Common myeloid progenitor, CD34-positive (primary cell): ENCODE measurements at regions of chr1 and their contacts with region 1.

Region 1: DNA sequence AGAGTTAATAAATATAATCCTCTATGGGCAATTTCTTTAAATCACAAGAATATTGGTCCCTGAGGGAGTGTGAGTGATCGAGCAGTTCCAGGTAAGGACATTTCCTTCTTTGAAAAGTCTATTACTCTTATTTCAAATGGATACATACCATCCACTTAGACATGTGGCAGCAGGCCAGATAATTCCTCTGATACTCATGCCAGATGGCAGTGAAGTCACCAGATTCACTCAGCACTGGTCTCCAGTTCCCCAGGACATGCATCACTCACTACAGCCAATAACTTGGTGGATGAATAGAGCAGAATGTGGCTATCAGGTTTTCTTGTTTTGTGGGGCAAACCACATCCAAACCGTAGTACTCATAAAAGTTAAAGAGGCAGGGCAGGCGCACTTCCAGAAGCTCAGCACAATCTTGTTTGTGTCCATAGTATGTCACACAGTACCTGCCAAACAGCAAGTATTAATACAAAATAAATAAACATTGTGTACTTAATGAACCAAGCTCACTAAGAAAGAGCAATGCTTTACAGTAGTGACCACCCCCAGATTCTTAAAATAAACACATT is 74.2 kb upstream of the CD53 start:
- DNase-seq: no peak
- H3K4me3 ChIP-seq: no peak overlapping the region
- H3K27ac ChIP-seq: no peak overlapping the region
- H3K4me1 ChIP-seq: no peaks in the 10 kb centered on the region
- H3K27me3 ChIP-seq: no peaks in the 10 kb centered on the region

Region 2: DNA sequence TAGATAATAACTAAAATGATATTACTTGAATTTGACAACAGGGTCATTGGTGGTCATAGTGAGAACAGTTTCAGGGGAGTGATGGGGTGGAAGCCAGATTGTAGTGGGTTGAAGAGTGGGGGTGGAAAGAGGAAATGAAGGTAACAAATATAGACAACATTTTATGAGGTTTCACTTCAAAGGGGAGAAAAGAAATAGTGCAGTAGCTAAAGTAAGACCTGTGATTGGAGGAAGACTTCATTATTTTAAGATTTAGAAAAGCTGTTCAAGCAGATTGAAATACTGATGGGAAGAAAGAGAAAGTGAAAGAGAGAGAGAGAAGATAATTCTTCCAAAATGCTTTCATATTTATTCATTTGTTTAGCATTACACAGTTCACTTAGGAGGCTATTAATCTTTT is 72.0 kb before region 1 on chr1:
- CTCF ChIA-PET with region 1: no interaction called
- POLR2A ChIA-PET with region 1: no interaction called
- DNase-seq: peak in 1 of 3 donors; percentile 7
- H3K4me3 ChIP-seq: no peak overlapping the region
- H3K27ac ChIP-seq: no peak overlapping the region
- H3K4me1 ChIP-seq: no peaks in the 10 kb centered on the region
- H3K27me3 ChIP-seq: peaks cover 0 to 17% (median 0%) of the 10 kb centered on the region in 5 experiments

Region 3: GRCh38 chr1:110787328-110788071 is 11.3 kb before region 1 on chr1:
- CTCF ChIA-PET with region 1: interaction called, 10 read pairs
- POLR2A ChIA-PET with region 1: no interaction called
- DNase-seq: peak; percentile 78 to 96 (median 95)
- H3K4me3 ChIP-seq: peak overlapping the region in 6 of 7 experiments; percentile 3 to 48 (median 40)
- H3K27ac ChIP-seq: peak overlapping the region; percentile 25 to 75
- H3K4me1 ChIP-seq: peaks cover 20 to 36% (median 33%) of the 10 kb centered on the region in 4 experiments
- H3K27me3 ChIP-seq: no peaks in the 10 kb centered on the region